A673 (cell line): ENCODE measurements at regions of chr21 and their contacts with region 1.

Region 1: GRCh38 chr21:39445321-39446269 is at the start of gene LCA5L:
- DNase-seq: peak; percentile 89
- H3K4me3 ChIP-seq: peak within 1 kb of the TSS; percentile 80
- H3K27ac ChIP-seq: peak within 1 kb of the TSS; percentile 75
- H3K4me1 ChIP-seq: no peaks in the 10 kb centered on the region
- H3K27me3 ChIP-seq: no peaks in the 10 kb centered on the region
- CTCF ChIP-seq: 0 out of 2 replicates have a peak, but pooled peaks have one; percentile 31
- total RNA-seq, gene LCA5L: 0.69 and 1.3 TPM in 2 replicates

Region 2: DNA sequence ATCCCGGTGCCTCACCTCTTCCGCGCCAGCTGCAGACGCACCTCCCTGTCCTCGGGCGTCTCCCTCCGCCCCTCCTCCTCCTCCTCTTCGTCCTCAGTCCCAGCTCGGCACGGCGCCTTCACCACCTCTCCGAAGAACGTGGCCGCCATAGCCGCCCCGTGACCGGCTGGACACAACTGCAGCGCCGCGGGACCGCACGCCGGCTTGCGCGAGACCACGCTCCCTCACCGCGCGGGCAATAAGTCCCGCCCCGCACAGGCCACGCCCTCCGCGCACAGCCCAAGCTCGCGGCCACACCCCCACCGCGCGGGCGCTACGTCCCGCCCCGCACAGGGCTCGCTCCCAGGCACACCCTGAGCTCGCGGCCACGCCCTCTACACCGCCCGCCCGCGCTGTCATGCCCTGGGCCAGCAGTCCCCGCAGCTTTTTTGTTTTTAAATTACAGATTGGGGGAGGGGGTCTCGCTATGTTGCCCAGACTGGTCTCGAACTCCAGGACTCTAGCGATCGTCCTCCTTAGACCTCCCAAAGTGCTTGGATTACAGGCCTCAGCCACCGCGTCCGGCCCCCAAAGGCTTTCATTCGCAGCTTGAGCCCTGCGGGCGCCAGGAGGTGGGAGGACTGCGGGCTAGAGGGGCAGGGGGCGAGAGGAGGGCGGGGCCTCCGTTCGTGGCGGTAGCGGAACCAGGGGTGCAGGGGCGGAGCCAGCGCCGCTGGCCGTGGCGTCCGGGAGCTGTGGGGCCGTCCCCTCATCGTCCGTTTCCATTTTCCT is 262.2 kb before region 1 on chr21 and contains the start of gene PSMG1:
- CTCF ChIA-PET with region 1: no interaction called
- POLR2A ChIA-PET with region 1: no interaction called
- intact Hi-C with region 1: loop called (anchors 5 kb)
- DNase-seq: peak; percentile 96
- H3K4me3 ChIP-seq: peak within 1 kb of the TSS; percentile 86
- H3K27ac ChIP-seq: peak within 1 kb of the TSS; percentile 95
- H3K4me1 ChIP-seq: peaks cover 12% of the 10 kb centered on the region
- H3K27me3 ChIP-seq: no peaks in the 10 kb centered on the region
- CTCF ChIP-seq: no peak
- total RNA-seq, gene PSMG1: 96.5 and 101 TPM in 2 replicates

Region 3: GRCh38 chr21:39251326-39251725 is 194.3 kb before region 1 on chr21:
- CTCF ChIA-PET with region 1: no interaction called
- POLR2A ChIA-PET with region 1: interaction called, 10 read pairs
- intact Hi-C with region 1: no loop called
- DNase-seq: no peak
- H3K4me3 ChIP-seq: no peak overlapping the region
- H3K27ac ChIP-seq: no peak overlapping the region
- H3K4me1 ChIP-seq: no peaks in the 10 kb centered on the region
- H3K27me3 ChIP-seq: no peaks in the 10 kb centered on the region
- CTCF ChIP-seq: no peak